Endothelial cell of umbilical vein (primary cell): ENCODE measurements at regions of chrX and their contacts with region 1.

Region 1: DNA sequence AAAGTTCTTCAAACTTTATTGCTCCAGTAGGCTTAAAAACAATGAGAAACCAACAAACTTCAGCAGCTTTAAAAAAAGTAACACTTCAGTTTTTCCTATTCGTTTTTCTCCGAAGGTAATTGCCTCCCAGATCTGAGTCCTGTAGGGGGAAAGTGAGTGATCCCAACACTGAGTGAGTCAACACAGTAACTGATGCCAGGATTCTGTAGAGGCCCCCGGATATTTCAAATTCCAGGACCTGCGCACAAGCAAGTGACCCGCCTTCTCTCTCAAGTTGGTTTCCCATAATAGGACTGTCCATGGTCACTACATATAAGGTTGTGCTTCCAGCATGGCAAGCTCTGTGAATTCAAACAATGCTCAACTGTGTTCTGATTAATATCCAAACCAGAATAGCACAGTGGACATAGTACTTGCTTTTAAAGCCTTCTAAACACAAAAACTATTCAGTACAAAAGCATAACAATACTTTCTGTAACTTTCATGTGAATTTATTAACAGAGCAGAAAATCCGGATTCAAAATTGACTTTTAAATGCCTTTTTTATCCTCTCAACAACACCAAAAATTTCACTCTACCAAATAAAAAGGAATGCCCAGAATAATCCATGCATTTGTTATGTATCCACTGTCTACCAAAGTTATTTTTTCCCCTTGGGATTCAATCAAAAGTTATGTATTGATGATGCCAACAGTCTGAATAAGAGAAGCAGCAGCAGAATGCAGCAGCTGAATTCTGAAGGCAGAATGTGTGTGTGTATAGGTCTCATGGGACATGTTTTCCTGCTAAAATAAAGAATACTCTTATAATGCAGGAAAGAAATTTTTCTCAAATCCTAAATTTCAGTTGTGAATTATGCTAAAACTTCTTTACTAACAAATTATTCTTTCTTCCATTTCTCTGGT is at the start of gene DMD:
- DNase-seq: peak; percentile 88
- H3K4me3 ChIP-seq: peak within 1 kb of the TSS; percentile 26 to 79 (median 53)
- H3K27ac ChIP-seq: peak within 1 kb of the TSS; percentile 51
- H3K4me1 ChIP-seq: peaks cover 8% of the 10 kb centered on the region
- H3K27me3 ChIP-seq: no peaks in the 10 kb centered on the region
- CTCF ChIP-seq: no peak
- POLR2A ChIP-seq: peak; percentile 56
- total RNA-seq, gene DMD: 7.3 and 12.6 TPM in 2 replicates

Region 2: DNA sequence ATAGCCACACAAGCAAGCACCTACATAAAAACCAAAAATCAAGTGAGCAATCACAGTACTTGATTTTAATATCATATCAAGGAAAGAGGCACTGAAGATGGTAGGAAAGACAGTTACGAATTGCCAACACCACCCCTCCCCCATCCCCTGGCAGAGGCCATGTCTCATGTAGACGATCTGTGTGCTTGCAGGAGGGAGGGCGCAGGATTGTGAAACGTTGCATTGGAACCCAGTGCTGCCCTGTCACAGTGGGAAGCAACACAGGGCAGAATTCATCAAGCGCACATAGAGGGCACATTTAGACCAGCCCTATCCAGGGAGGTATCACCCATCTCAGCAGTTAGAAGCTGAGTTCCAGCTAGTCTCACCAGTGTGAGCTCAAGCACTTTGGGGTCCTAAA is 360.1 kb before region 1 on chrX:
- CTCF ChIA-PET with region 1: no interaction called
- POLR2A ChIA-PET with region 1: no interaction called
- dilution Hi-C with region 1: no loop called
- intact Hi-C with region 1: no loop called
- DNase-seq: no peak
- H3K4me3 ChIP-seq: no peak overlapping the region
- H3K27ac ChIP-seq: no peak overlapping the region
- H3K4me1 ChIP-seq: no peaks in the 10 kb centered on the region
- H3K27me3 ChIP-seq: no peaks in the 10 kb centered on the region
- CTCF ChIP-seq: no peak
- POLR2A ChIP-seq: no peak

Region 3: GRCh38 chrX:33183361-33183760 is 28.2 kb before region 1 on chrX:
- CTCF ChIA-PET with region 1: no interaction called
- POLR2A ChIA-PET with region 1: no interaction called
- dilution Hi-C with region 1: no loop called
- intact Hi-C with region 1: loop called (anchors 2 kb)
- DNase-seq: peak; percentile 81
- H3K4me3 ChIP-seq: no peak overlapping the region
- H3K27ac ChIP-seq: peak overlapping the region; percentile 40
- H3K4me1 ChIP-seq: peaks cover 9% of the 10 kb centered on the region
- H3K27me3 ChIP-seq: no peaks in the 10 kb centered on the region
- CTCF ChIP-seq: no peak
- POLR2A ChIP-seq: no peak

Region 4: GRCh38 chrX:33194876-33195433 is 16.7 kb before region 1 on chrX:
- CTCF ChIA-PET with region 1: interaction called, 3 read pairs
- POLR2A ChIA-PET with region 1: no interaction called
- dilution Hi-C with region 1: no loop called
- intact Hi-C with region 1: loop called (anchors 2 kb)
- DNase-seq: peak; percentile 62
- H3K4me3 ChIP-seq: no peak overlapping the region
- H3K27ac ChIP-seq: peak overlapping the region; percentile 83
- H3K4me1 ChIP-seq: no peaks in the 10 kb centered on the region
- H3K27me3 ChIP-seq: no peaks in the 10 kb centered on the region
- CTCF ChIP-seq: no peak
- POLR2A ChIP-seq: no peak

Region 5: GRCh38 chrX:33285550-33285949 is 73.9 kb after region 1 on chrX:
- CTCF ChIA-PET with region 1: no interaction called
- POLR2A ChIA-PET with region 1: no interaction called
- dilution Hi-C with region 1: no loop called
- intact Hi-C with region 1: loop called (anchors 2 kb)
- DNase-seq: no peak
- H3K4me3 ChIP-seq: no peak overlapping the region
- H3K27ac ChIP-seq: no peak overlapping the region
- H3K4me1 ChIP-seq: no peaks in the 10 kb centered on the region
- H3K27me3 ChIP-seq: no peaks in the 10 kb centered on the region
- CTCF ChIP-seq: no peak
- POLR2A ChIP-seq: no peak

Region 6: DNA sequence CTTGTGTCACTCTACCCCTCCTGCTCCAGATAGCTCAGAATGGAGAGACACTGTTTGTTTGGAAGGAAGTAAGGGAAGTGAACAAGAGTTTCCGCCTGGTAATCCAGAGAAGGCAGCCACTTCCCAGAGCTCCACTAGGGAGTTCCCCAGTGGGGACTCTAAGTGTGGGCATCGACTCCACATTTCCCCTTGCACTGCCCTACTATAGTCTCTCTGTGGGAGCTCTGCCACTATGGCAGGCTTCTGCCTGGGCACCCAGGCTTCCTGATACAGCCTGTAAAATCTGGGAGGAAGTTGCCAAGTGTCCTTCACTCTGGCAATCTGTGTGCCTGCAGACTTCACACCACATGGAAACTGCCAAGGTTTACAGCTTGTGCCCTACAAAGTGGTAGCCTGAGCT is 245.5 kb after region 1 on chrX:
- CTCF ChIA-PET with region 1: no interaction called
- POLR2A ChIA-PET with region 1: no interaction called
- dilution Hi-C with region 1: no loop called
- intact Hi-C with region 1: no loop called
- DNase-seq: no peak
- H3K4me3 ChIP-seq: no peak overlapping the region
- H3K27ac ChIP-seq: no peak overlapping the region
- H3K4me1 ChIP-seq: no peaks in the 10 kb centered on the region
- H3K27me3 ChIP-seq: no peaks in the 10 kb centered on the region
- CTCF ChIP-seq: no peak
- POLR2A ChIP-seq: no peak